ENCODE measurements at regions of chr19 and their contacts with region 1.

Region 1: DNA sequence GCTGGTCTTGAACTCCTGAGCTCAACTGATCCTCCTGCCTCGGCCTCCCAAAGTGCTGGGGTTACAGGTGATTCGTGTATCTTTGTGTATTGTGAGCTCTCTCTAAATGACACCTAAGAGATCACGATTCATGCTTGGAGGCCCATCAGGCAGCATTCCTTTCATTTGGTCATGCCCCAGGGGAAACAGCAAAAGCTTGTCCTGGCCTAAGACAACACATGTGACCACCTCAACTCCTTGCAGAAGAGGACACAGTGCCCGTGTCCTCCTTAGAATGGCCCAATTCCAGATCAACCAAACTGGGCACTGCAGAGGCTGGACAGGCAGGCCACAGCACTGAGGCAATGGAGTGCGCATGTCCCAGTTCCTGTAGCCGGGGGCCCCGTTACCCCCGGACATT is 32.5 kb downstream of the ZC3H4 start:
- DNase-seq: no peak
- H3K4me3 Mint-ChIP-seq: no peak overlapping the region
- H3K27ac Mint-ChIP-seq: no peak overlapping the region
- H3K4me1 Mint-ChIP-seq: peaks cover 4% of the 10 kb centered on the region
- H3K27me3 Mint-ChIP-seq: no peaks in the 10 kb centered on the region

Region 2: GRCh38 chr19:47028195-47028601 is 52.9 kb before region 1 on chr19:
- CTCF ChIA-PET with region 1: no interaction called
- POLR2A ChIA-PET with region 1: no interaction called
- DNase-seq: no peak
- H3K4me3 Mint-ChIP-seq: no peak overlapping the region
- H3K27ac Mint-ChIP-seq: no peak overlapping the region
- H3K4me1 Mint-ChIP-seq: peaks cover 2% of the 10 kb centered on the region
- H3K27me3 Mint-ChIP-seq: peaks cover 50% of the 10 kb centered on the region

Region 3: GRCh38 chr19:47112997-47113849 is 32.1 kb after region 1 on chr19 and contains the start of gene ZC3H4:
- CTCF ChIA-PET with region 1: interaction called, 15 read pairs
- POLR2A ChIA-PET with region 1: interaction called, 9 read pairs
- DNase-seq: peak; percentile 100
- H3K4me3 Mint-ChIP-seq: peak within 1 kb of the TSS; percentile 93
- H3K27ac Mint-ChIP-seq: peak within 1 kb of the TSS; percentile 100
- H3K4me1 Mint-ChIP-seq: peaks cover 29% of the 10 kb centered on the region
- H3K27me3 Mint-ChIP-seq: no peaks in the 10 kb centered on the region
- total RNA-seq, gene ZC3H4: 99.5 to 115 TPM

Region 4: DNA sequence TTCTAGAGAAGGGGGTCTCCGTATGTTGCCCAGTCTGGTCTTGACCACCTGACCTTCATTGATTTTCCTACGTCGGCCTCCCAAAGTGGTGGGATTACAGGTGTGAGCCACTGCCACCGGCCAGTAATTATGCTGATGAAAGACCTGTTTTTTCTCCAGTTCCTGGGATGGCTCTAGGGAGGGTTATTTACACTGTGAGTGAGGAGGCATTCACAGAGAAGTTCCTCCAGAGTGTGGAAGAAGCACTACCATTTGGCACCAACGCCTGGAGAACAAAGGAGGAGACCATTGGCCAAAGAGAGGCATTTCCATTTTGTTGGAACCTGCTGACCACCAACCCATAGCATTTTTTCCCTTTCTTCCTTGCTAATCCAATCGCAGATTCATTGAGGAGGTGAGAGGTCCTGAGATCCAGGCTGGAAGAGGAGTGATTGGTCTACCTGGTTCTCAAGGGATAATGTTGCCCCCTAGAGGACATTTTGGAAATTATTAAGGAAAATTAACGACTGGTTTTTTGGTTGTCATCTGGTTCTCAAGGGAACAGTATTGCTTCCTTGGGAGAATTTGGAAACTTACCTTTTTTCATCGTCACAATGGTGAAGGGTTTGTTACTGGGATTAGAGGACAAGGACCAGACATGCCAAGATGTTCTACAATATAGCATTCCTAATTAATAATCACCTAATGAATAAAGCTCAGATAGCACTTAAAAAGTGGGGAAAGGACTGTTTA is 44.0 kb after region 1 on chr19:
- CTCF ChIA-PET with region 1: interaction called, 13 read pairs
- POLR2A ChIA-PET with region 1: no interaction called
- DNase-seq: no peak
- H3K4me3 Mint-ChIP-seq: no peak overlapping the region
- H3K27ac Mint-ChIP-seq: no peak overlapping the region
- H3K4me1 Mint-ChIP-seq: peaks cover 7% of the 10 kb centered on the region
- H3K27me3 Mint-ChIP-seq: peaks cover 2% of the 10 kb centered on the region

Region 5: DNA sequence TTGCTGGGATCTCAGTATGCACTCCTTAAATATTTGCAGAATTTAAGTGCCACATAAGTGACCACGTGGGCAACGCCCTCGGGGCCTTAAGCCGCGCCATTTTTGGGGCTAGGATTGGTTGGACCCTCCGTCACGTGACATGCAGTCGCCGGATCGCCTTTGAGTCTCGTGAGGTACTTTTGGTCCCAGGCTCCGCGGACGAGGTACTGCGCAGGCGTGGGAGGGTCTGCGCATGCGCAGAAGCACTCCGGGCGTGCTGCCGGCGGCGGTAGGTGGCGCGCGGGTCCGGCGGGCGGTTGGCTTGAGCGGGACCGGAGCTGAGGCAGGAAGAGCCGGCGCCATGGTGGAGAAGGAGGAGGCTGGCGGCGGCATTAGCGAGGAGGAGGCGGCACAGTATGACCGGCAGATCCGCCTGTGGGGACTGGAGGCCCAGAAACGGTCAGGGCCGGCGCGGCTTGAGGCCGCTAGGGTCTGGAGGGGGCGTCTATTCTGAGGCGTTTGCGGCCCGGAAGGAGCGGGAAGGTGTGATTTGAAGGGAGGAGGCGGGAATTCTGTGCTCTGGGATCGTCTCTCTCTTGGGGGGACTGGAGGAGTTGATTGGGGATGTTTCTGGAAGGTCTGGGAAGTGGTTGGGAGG is 49.6 kb after region 1 on chr19 and contains the start of gene SAE1:
- CTCF ChIA-PET with region 1: interaction called, 13 read pairs
- POLR2A ChIA-PET with region 1: no interaction called
- DNase-seq: peak; percentile 92
- H3K4me3 Mint-ChIP-seq: peak within 1 kb of the TSS; percentile 99
- H3K27ac Mint-ChIP-seq: peak within 1 kb of the TSS; percentile 99
- H3K4me1 Mint-ChIP-seq: peaks cover 46% of the 10 kb centered on the region
- H3K27me3 Mint-ChIP-seq: no peaks in the 10 kb centered on the region
- total RNA-seq, gene SAE1: 162 to 168 TPM

Measured in activated CD4-positive, alpha-beta T cell treated with anti-CD3 and anti-CD28 coated beads, Interleukin-2, amount 10 ng/mL, durations not matched to agents 7 days and 5 days (primary cell).